T-cell (primary cell): ENCODE measurements at regions of chr12 and their contacts with region 1.

Region 1: DNA sequence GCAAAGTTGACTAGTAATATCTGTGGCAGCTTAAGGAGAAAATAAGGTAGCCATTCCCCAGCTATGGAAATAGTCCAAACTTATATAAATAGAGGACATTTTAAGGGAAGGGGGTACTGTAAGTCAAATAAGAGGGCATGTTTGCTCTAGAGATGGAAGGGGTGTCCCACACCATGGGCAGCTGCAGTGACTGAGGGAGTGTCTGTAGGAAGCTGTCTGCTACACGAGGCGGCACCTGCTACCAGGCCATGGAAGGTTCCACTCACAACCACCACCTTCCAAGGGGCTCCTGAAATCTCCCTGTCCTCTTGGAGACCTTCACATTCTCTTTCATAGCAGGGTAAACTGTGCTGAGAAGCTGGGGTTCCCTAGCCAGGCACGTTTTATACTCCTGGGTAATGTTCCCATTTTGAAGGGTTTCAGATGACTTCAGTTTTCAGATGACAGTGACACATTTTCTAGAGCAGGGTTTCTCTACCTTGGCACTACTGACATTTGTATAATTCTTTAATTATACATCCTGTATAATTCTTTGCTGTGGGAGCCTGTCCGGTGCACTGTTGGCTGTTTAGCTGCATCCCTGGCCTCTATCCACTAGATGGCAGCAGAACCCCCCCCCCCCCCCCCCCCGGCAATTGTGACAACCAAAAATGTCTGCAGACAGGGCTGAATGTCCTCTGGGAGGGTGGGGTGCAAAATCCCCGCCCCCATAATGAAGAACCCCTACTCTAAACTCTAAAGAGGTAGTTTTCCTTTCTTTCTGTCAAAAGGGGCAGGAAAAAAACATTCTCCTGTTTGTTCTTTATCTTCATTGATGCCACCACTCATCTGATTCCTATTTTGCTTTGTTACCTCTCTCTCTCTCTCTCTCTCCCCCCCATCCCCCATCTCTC is 11.6 kb upstream of the SMCO2 start:
- DNase-seq: peak in 22 of 35 experiments; percentile 1 to 41 (median 4)
- ATAC-seq: peak; percentile 23 to 57 (median 51)
- H3K4me3 ChIP-seq: no peak overlapping the region
- H3K4me3 Mint-ChIP-seq: no peak overlapping the region
- H3K27ac ChIP-seq: no peak overlapping the region
- H3K27ac Mint-ChIP-seq: no peak overlapping the region
- H3K4me1 ChIP-seq: no peaks in the 10 kb centered on the region
- H3K4me1 Mint-ChIP-seq: peaks cover 2 to 16% (median 15%) of the 10 kb centered on the region in 3 donors
- H3K27me3 ChIP-seq: peaks cover 0 to 2% of the 10 kb centered on the region in 2 experiments
- H3K27me3 Mint-ChIP-seq: peaks cover 7 to 20% of the 10 kb centered on the region in 2 donors

Region 2: DNA sequence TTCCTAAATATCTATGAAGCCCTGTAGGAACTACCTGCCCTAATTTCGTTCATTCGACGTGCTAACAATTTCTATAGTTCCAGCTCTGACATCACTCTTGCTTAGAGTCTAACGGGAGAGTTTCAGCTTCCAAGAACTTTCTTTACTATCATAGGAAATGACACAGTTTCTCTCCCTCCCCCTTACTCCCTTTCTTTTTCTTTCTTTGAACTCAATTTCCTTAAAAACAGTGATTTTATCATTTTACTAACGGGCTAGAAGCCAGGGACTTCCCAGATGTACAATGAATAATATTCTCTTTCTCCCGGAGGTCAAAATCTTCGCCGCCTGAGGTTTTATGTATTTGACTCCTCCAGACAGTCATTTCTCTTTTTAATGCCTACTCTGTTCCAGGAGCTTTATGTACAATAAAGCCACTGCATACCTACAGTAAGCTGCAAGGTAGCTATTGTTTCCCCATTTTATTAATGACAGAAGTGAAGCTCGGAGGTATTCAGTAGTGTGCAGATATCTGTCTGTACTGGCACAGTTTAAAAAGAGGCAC is 27.3 kb after region 1 on chr12:
- CTCF ChIA-PET with region 1: interaction called in 1 of 2 experiments, 4 read pairs
- POLR2A ChIA-PET with region 1: interaction called in 1 of 2 experiments, 11 read pairs
- DNase-seq: no peak
- ATAC-seq: no peak
- H3K4me3 ChIP-seq: no peak overlapping the region
- H3K4me3 Mint-ChIP-seq: no peak overlapping the region
- H3K27ac ChIP-seq: no peak overlapping the region
- H3K27ac Mint-ChIP-seq: peak overlapping the region in 1 of 2 donors; percentile 28
- H3K4me1 ChIP-seq: peaks cover 0 to 4% of the 10 kb centered on the region in 2 experiments
- H3K4me1 Mint-ChIP-seq: peaks cover 15 to 20% (median 17%) of the 10 kb centered on the region in 3 donors
- H3K27me3 ChIP-seq: peaks cover 0 to 3% of the 10 kb centered on the region in 2 experiments
- H3K27me3 Mint-ChIP-seq: peaks cover 0 to 8% of the 10 kb centered on the region in 2 donors

Region 3: DNA sequence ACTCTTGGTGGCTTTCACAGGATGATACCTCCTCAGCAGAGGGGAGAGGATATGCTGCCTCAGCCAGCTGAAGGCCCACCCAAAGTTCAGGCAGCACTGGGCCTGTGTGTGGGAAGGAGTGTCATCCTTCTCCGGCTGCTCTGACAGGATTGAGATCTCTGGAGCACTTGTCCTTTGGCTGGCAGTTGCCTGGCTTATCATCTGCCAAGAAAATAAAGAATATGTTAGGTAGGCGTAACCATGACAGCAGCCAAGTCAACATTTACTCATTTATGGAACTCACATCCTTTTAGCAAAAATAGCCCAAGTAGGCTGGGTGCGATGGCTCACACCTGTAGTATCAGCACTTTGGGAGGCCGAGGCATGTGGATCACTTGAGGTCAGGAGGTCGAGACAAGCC is 157.6 kb after region 1 on chr12:
- CTCF ChIA-PET with region 1: interaction called in 1 of 2 experiments, 11 read pairs
- POLR2A ChIA-PET with region 1: no interaction called
- DNase-seq: no peak
- ATAC-seq: no peak
- H3K4me3 ChIP-seq: no peak overlapping the region
- H3K4me3 Mint-ChIP-seq: no peak overlapping the region
- H3K27ac ChIP-seq: no peak overlapping the region
- H3K27ac Mint-ChIP-seq: no peak overlapping the region
- H3K4me1 ChIP-seq: no peaks in the 10 kb centered on the region
- H3K4me1 Mint-ChIP-seq: peaks cover 9 to 15% (median 12%) of the 10 kb centered on the region in 3 donors
- H3K27me3 ChIP-seq: no peaks in the 10 kb centered on the region
- H3K27me3 Mint-ChIP-seq: peaks cover 0 to 2% of the 10 kb centered on the region in 2 donors